ENCODE measurements at regions of chr12 and their contacts with region 1.

Region 1: DNA sequence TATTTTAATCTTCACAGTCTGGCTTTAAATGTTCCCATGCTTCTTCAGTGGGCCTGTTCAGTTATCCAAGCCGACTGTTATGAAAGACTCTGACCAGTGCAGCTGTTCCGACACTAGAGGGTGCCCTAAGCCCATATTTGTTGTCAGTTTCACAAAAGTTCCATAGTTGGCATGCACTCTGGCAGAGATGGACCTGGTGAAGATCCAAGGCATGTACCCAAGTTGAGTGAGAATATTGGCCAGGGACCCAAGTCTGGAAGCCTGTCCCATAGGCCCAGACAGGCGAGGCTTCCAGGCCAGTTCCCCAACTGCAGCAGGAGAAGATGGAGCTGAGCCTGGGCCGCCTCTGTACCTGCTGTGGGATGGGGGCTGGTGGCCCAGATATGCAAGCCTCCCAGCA is 27.4 kb upstream of the GUCY2C start:
- DNase-seq: peak; percentile 55

Region 2: GRCh38 chr12:14756334-14757143 is 32.8 kb after region 1 on chr12:
- CTCF ChIA-PET with region 1: interaction called, 10 read pairs
- POLR2A ChIA-PET with region 1: no interaction called
- DNase-seq: peak; percentile 27